Testis (tissue), 5 donors: ENCODE measurements at regions of chr13 and their contacts with region 1.

Region 1: GRCh38 chr13:19782049-19782726 is 557 bp downstream of the PSPC1 start:
- DNase-seq: peak; percentile 59
- H3K4me3 ChIP-seq: peak overlapping the region; percentile 92 to 99
- H3K27ac ChIP-seq: peak overlapping the region; percentile 94 to 95
- H3K4me1 ChIP-seq: peaks cover 4% of the 10 kb centered on the region
- H3K27me3 ChIP-seq: no peaks in the 10 kb centered on the region
- CTCF ChIP-seq: no peak
- POLR2A ChIP-seq: no peak

Region 2: GRCh38 chr13:19633479-19634255 is 148.5 kb before region 1 on chr13 and contains the start of gene MPHOSPH8:
- intact Hi-C with region 1: loop called (anchors 10 kb)
- DNase-seq: peak; percentile 97
- H3K4me3 ChIP-seq: peak within 1 kb of the TSS; percentile 78 to 83
- H3K27ac ChIP-seq: peak within 1 kb of the TSS; percentile 87 to 93
- H3K4me1 ChIP-seq: peaks cover 10% of the 10 kb centered on the region
- H3K27me3 ChIP-seq: no peaks in the 10 kb centered on the region
- CTCF ChIP-seq: no peak
- POLR2A ChIP-seq: peak; percentile 35
- total RNA-seq, gene MPHOSPH8: 31.0 to 39.2 TPM

Region 3: DNA sequence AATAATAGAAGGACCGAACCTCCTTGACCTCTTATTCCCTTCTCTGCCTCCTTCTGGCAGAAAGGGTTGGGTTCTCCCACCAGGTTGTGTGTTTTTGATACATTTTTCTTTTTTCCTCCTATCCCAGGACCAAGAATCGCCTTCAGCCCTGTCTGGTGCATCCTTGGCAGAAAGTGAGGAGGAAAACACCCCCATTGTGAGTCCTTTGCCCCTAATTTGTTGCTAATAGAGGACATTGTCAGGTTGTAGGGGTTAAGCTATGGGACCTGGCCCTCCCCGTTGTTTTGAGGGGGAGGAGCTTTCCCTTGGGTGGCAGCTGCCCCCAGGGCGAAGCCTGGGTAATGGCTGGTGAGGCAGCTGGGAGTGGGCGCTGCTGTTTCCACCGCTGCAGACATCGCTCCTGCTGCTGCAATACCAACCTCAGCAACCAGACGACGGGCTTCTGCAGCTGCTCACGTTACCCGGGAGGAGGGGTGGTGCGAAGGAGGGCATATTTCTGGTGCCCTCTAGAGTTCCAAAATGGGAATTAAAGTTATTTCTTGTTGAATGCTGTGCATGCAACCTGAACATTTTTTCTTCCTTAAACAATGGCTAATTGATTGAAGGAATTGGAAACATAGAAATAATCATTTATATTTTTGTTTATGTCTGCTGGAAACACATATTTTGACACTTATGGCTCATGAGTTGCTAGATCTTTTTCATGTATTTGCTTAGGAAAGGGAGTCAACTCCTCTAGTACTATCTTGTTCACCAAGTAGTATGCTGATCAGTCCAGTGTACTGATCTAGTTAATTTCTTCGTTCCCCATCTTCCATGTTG is 177.9 kb after region 1 on chr13:
- intact Hi-C with region 1: no loop called
- DNase-seq: peak; percentile 92
- H3K4me3 ChIP-seq: peak overlapping the region; percentile 92
- H3K27ac ChIP-seq: peak overlapping the region; percentile 99 to 100
- H3K4me1 ChIP-seq: peaks cover 17% of the 10 kb centered on the region
- H3K27me3 ChIP-seq: no peaks in the 10 kb centered on the region
- CTCF ChIP-seq: peak; percentile 80 to 89 (median 85)
- POLR2A ChIP-seq: no peak

Region 4: DNA sequence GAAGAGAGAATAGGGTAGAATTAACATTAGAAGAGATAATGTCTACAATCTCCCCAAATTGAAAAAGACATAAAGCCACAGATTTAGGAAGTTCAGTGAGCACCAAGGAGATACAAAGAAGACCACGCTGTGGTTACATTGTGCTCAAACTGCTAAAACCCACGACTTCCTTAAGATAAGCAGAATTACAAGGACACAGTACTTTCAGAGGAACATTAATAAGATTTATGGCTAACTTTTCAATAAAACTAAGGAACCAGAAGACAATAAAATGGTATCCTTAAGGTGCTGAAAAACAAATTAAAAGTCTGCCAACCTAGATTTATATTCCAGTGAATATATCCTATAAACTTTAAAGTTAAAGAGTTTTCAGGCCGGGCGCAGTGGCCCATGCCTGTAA is 913.9 kb after region 1 on chr13:
- intact Hi-C with region 1: no loop called
- DNase-seq: no peak
- H3K4me3 ChIP-seq: no peak overlapping the region
- H3K27ac ChIP-seq: no peak overlapping the region
- H3K4me1 ChIP-seq: no peaks in the 10 kb centered on the region
- H3K27me3 ChIP-seq: no peaks in the 10 kb centered on the region
- CTCF ChIP-seq: no peak
- POLR2A ChIP-seq: no peak